Ovary (tissue), 10 donors: ENCODE measurements at regions of chr1 and their contacts with region 1.

Region 1: DNA sequence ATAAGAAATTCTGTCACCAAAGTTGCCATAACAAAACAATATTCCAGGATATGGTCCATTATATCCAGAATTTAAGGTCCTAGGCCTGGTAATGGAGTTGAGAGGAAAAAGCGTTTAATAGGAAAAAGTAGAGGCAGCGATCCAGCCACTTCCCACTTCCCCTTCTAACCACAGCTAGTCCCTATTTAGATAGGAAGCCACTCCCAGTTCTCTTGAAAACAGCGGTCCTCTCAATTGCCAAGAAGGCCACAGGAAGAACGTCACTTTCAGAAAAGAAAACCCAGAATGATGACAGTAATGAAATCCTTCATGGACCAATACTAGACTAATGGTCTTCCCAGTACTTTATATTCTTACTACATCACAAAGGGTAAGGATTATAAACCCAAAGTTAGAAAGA is 38.6 kb downstream of the ABL2 start:
- DNase-seq: no peak
- H3K4me3 ChIP-seq: no peak overlapping the region
- H3K27ac ChIP-seq: no peak overlapping the region
- H3K4me1 ChIP-seq: no peaks in the 10 kb centered on the region
- H3K27me3 ChIP-seq: no peaks in the 10 kb centered on the region
- CTCF ChIP-seq: no peak
- EP300 ChIP-seq: no peak
- POLR2A ChIP-seq: no peak

Region 2: GRCh38 chr1:179121159-179121938 is 69.5 kb before region 1 on chr1:
- intact Hi-C with region 1: loop called in 1 of 4 experiments (anchors 10 kb)
- DNase-seq: peak in 1 of 5 donors; percentile 48
- H3K4me3 ChIP-seq: no peak overlapping the region
- H3K27ac ChIP-seq: no peak overlapping the region
- H3K4me1 ChIP-seq: no peaks in the 10 kb centered on the region
- H3K27me3 ChIP-seq: no peaks in the 10 kb centered on the region
- CTCF ChIP-seq: peak; percentile 17 to 57 (median 45)
- EP300 ChIP-seq: no peak
- POLR2A ChIP-seq: no peak

Region 3: DNA sequence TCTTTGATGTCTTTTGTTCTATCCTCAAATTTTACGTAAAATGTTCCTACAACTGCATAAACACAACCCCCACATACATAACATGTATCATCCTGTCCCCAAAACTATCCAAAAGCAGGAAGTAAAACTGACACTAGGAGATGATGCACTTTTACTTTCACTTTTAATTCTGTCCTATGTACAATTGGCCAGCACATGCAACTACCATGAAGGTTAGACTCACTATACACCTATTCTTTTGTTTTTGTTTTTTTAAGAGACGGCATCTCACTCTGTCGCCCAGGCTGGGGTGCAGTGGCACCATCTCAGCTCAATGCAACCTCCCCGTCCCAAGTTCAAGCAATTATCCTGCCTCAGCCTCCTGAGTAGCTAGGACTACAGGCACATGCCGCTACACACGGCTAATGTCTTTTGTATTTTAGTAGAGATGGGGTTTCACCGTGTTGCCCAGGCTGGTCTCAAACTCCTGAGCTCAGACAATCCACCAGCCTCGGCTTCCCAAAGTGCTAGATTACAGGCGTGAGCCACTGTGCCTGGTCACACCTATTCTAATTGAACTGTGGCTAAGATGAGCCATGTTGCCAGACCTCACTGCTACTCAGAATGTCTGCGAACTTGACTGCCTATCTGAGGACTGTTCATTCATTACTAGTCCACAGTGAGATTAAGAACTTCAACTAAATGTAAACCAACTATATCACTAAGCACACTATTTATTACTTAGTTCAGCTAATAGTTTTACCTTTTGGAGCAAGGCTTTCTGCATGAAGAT is 61.0 kb before region 1 on chr1:
- intact Hi-C with region 1: loop called in 1 of 4 experiments (anchors 10 kb)
- DNase-seq: no peak
- H3K4me3 ChIP-seq: no peak overlapping the region
- H3K27ac ChIP-seq: peak overlapping the region in 1 of 2 donors; percentile 39
- H3K4me1 ChIP-seq: peaks cover 6% of the 10 kb centered on the region
- H3K27me3 ChIP-seq: no peaks in the 10 kb centered on the region
- CTCF ChIP-seq: no peak
- EP300 ChIP-seq: no peak
- POLR2A ChIP-seq: no peak

Region 4: GRCh38 chr1:179298952-179299351 is 108.1 kb after region 1 on chr1:
- intact Hi-C with region 1: no loop called
- DNase-seq: no peak
- H3K4me3 ChIP-seq: no peak overlapping the region
- H3K27ac ChIP-seq: no peak overlapping the region
- H3K4me1 ChIP-seq: peaks cover 2% of the 10 kb centered on the region
- H3K27me3 ChIP-seq: no peaks in the 10 kb centered on the region
- CTCF ChIP-seq: no peak
- EP300 ChIP-seq: no peak
- POLR2A ChIP-seq: no peak